Motor neuron (in vitro differentiated cells): ENCODE measurements at regions of chr11 and their contacts with region 1.

Region 1: DNA sequence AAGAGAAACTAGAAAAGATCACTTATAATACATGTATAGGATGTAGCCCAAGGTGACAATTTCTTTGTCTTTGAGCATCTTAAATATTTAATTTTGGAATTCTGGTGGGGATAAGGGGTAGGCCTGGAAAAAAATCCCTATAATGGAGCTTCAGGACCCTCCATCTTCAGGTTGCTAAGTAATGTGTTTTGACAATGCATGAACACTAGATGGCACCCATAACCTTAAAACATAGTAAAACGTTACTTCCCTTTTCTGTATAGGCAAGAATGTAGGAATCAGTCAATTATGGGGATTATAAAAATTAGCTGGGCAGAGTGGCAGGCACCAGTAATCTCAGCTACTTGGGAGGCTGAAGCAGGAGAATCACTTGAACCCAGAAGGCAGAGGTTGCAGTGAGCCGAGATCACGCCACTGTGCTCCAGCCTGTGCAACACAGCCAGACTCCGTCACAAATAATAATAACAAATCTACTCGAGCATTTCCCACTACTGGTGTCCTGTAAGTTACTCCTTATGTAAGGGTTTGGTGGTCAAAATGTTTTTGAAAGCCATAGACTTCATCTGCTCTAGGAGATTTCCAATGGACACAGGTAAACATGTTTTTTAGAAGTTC is 541.9 kb upstream of the CCDC90B start:
- ATAC-seq: peak in 6 of 8 experiments; percentile 57 to 87 (median 74)
- H3K4me3 ChIP-seq: no peak overlapping the region
- H3K27ac ChIP-seq: no peak overlapping the region
- H3K4me1 ChIP-seq: no peaks in the 10 kb centered on the region

Region 2: DNA sequence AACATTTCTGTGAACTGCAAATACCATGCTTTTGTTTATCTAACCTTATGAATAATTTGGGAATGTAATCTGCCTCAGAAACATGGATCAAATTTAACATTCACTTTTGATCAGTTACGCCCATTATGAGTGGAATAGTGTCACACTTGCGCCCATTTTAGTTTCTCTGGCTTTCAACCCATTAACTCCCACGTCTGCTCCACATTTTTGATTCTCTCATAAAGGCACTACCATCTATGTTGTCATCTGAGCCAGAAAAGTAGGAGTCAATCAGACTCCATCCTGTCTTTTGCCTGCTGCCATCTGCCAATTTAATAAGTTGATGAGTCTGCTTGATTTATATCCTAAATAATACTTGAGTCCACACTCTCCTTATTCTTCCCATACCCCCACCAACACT is 708.4 kb after region 1 on chr11:
- in situ Hi-C with region 1: loop called in 7 of 9 experiments (anchors 10 to 25 kb)
- ATAC-seq: no peak
- H3K4me3 ChIP-seq: no peak overlapping the region
- H3K27ac ChIP-seq: no peak overlapping the region
- H3K4me1 ChIP-seq: no peaks in the 10 kb centered on the region